A673 (cell line): ENCODE measurements at regions of chr6 and their contacts with region 1.

Region 1: DNA sequence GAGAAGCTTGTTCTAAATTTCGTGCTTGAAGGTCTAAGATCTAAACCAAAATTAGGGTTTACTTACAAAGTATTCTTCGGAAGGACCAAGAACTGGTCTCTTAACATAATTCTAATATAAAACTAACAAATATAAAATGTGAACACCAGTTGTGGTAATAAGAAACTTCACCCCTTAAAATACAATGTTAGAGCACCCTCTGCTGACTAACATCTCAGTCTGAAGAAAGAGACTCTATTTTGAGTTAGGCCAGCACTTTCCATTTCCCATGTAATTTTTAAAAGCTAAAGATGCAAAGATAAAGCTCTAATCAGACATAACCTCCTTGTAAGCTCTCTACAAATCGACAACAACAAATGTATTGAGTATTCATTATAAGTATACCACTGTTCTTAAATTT is 24.6 kb downstream of the ATG5 start:
- DNase-seq: peak; percentile 54
- H3K4me3 ChIP-seq: no peak overlapping the region
- H3K27ac ChIP-seq: no peak overlapping the region
- H3K4me1 ChIP-seq: peaks cover 11% of the 10 kb centered on the region
- H3K27me3 ChIP-seq: no peaks in the 10 kb centered on the region
- CTCF ChIP-seq: peak; percentile 63

Region 2: DNA sequence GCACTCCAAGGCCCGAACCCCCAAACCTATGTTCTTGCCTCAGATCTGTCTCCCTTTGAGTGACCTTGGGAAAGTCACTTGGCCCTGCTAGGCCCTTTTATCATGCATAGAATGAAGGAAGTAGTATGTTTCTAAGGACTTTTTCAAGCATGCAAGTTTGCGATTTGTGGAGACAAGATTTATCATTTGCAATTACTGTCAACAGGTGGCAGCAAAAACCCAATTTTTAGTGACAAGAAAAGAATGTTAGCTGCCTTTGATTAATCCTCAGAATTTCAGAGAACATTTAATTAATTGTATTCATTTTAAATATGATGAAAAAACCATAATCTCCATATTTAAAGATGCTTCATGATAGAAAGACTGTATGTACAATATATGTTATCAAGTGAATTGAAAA is 869.7 kb before region 1 on chr6:
- CTCF ChIA-PET with region 1: no interaction called
- POLR2A ChIA-PET with region 1: no interaction called
- intact Hi-C with region 1: loop called (anchors 10 kb)
- DNase-seq: peak; percentile 60
- H3K4me3 ChIP-seq: no peak overlapping the region
- H3K27ac ChIP-seq: no peak overlapping the region
- H3K4me1 ChIP-seq: peaks cover 13% of the 10 kb centered on the region
- H3K27me3 ChIP-seq: no peaks in the 10 kb centered on the region
- CTCF ChIP-seq: peak; percentile 71

Region 3: GRCh38 chr6:105484238-105485161 is 816.4 kb before region 1 on chr6:
- CTCF ChIA-PET with region 1: no interaction called
- POLR2A ChIA-PET with region 1: no interaction called
- intact Hi-C with region 1: loop called (anchors 2 kb)
- DNase-seq: peak; percentile 66
- H3K4me3 ChIP-seq: no peak overlapping the region
- H3K27ac ChIP-seq: no peak overlapping the region
- H3K4me1 ChIP-seq: no peaks in the 10 kb centered on the region
- H3K27me3 ChIP-seq: no peaks in the 10 kb centered on the region
- CTCF ChIP-seq: peak; percentile 85

Region 4: GRCh38 chr6:105748737-105749161 is 552.2 kb before region 1 on chr6:
- CTCF ChIA-PET with region 1: no interaction called
- POLR2A ChIA-PET with region 1: no interaction called
- intact Hi-C with region 1: loop called (anchors 5 kb)
- DNase-seq: no peak
- H3K4me3 ChIP-seq: no peak overlapping the region
- H3K27ac ChIP-seq: no peak overlapping the region
- H3K4me1 ChIP-seq: no peaks in the 10 kb centered on the region
- H3K27me3 ChIP-seq: peaks cover 4% of the 10 kb centered on the region
- CTCF ChIP-seq: no peak

Region 5: GRCh38 chr6:106085984-106086813 is 214.7 kb before region 1 on chr6 and contains the start of gene PRDM1:
- CTCF ChIA-PET with region 1: no interaction called
- POLR2A ChIA-PET with region 1: no interaction called
- intact Hi-C with region 1: loop called (anchors 10 kb)
- DNase-seq: peak; percentile 49
- H3K4me3 ChIP-seq: peak within 1 kb of the TSS; percentile 49
- H3K27ac ChIP-seq: no peak within 1 kb of the TSS
- H3K4me1 ChIP-seq: peaks cover 14% of the 10 kb centered on the region
- H3K27me3 ChIP-seq: peaks cover 14% of the 10 kb centered on the region
- CTCF ChIP-seq: peak; percentile 31; the same call in 1 of the 2 replicates
- total RNA-seq, gene PRDM1: not detected in 2 replicates

Region 6: GRCh38 chr6:106501960-106502371 is 201.0 kb after region 1 on chr6:
- CTCF ChIA-PET with region 1: no interaction called
- POLR2A ChIA-PET with region 1: no interaction called
- intact Hi-C with region 1: no loop called
- DNase-seq: no peak
- H3K4me3 ChIP-seq: no peak overlapping the region
- H3K27ac ChIP-seq: no peak overlapping the region
- H3K4me1 ChIP-seq: no peaks in the 10 kb centered on the region
- H3K27me3 ChIP-seq: no peaks in the 10 kb centered on the region
- CTCF ChIP-seq: no peak